Activated CD4-positive, alpha-beta T cell treated with anti-CD3 and anti-CD28 coated beads for 36 hours (primary cell): ENCODE measurements at regions of chr1 and their contacts with region 1.

Region 1: DNA sequence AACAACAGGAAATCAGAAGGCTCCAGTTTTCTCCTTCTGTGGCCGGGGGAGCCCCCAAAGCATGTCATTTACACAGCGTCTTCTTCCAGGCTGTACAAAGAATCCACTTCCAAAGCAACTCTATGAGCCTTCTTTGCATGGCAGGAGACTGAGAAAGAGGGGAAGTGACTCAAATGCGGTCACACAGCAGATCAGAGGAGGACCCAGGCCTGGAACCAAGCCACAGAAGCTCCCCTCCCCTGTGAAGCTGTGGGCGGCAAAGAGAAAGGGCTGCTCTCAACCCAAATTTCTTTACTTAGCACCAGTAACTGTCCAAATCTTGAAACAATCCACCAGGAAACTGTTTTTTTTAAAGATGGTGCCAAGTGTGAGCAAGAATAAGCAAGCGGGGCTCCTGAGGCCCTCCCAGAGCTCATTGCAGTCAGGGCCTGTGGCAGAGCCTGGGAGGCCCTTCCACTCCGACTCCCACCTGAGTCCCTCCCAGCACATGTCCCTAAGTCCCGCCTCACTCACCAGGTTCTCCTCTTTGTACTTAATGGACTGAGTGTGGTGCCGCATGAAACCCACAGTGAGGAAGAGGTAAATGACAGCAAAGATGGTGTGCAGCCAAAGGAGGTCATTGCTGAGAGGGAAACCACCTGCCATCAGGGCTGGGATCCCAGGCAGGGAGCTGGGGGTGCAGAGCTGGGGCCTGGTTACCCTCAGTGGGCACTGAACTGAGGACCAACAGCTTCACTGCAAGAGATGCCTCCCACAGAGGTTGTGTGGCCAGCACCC is 15.9 kb downstream of the TMEM63A start:
- DNase-seq: peak; percentile 88
- ATAC-seq: peak; percentile 95
- H3K4me3 Mint-ChIP-seq: peak overlapping the region; percentile 28
- H3K27ac Mint-ChIP-seq: peak overlapping the region; percentile 82
- H3K4me1 Mint-ChIP-seq: peaks cover 43% of the 10 kb centered on the region
- H3K27me3 Mint-ChIP-seq: no peaks in the 10 kb centered on the region

Region 2: GRCh38 chr1:225851805-225852204 is 14.4 kb before region 1 on chr1:
- CTCF ChIA-PET with region 1: no interaction called
- POLR2A ChIA-PET with region 1: interaction called, 3 read pairs
- intact Hi-C with region 1: loop called in 1 of 2 experiments (anchors 1 kb)
- DNase-seq: peak; percentile 40
- ATAC-seq: peak; percentile 60
- H3K4me3 Mint-ChIP-seq: no peak overlapping the region
- H3K27ac Mint-ChIP-seq: peak overlapping the region; percentile 64
- H3K4me1 Mint-ChIP-seq: peaks cover 47% of the 10 kb centered on the region
- H3K27me3 Mint-ChIP-seq: no peaks in the 10 kb centered on the region